Naive thymus-derived CD4-positive, alpha-beta T cell (primary cell): ENCODE measurements at regions of chr5 and their contacts with region 1.

Region 1: DNA sequence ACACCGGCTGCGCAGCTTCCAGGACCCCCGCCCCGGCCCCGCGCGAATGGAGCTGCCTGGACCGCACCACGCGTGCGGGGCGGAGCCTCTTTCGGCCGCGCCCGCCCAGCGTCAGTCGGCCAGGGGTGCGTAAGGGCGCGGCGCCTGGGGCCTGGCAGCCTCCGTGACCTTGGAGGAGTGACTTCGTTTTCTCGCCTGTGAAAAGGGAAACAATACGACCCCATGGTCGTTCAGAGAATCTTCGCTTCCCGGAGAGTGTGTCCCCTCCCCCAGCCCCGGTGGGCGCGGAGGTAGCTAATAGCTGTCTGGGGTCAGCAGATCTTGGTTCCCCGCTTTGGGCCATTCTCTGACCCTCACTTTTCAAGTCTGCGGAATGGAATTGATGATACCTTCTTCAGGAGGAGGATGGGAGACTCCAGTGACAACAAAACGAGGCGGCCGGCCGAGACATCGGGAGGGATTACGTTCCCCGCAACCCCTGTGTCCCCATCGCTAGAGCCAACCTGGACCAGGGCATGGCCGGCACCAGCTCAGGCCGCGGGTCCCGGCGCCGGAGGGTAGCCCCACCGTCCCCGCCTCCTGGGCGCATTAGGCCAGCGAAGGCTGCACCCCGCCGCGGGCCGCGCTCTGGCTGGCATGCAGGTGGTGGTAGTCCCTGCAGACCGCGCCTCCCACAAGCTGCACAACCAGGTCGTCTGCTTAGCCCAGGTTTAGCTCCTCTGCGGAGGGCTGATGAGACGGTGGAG is 5.5 kb upstream of the CDHR2 start:
- DNase-seq: peak; percentile 60 to 84 (median 72)
- ATAC-seq: peak; percentile 79
- H3K4me3 ChIP-seq: peak overlapping the region; percentile 75
- H3K4me3 Mint-ChIP-seq: peak overlapping the region; percentile 90 to 96 (median 94)
- H3K27ac ChIP-seq: peak overlapping the region; percentile 88
- H3K27ac Mint-ChIP-seq: peak overlapping the region; percentile 80 to 97 (median 94)
- H3K4me1 ChIP-seq: peaks cover 46 to 51% of the 10 kb centered on the region in 2 donors
- H3K4me1 Mint-ChIP-seq: peaks cover 41 to 76% (median 69%) of the 10 kb centered on the region in 7 donors
- H3K27me3 ChIP-seq: no peaks in the 10 kb centered on the region
- H3K27me3 Mint-ChIP-seq: no peaks in the 10 kb centered on the region

Region 2: GRCh38 chr5:176388444-176389134 is 155.0 kb before region 1 on chr5 and contains the starts of genes HIGD2A and NOP16:
- CTCF ChIA-PET with region 1: no interaction called
- POLR2A ChIA-PET with region 1: interaction called, 3 read pairs
- intact Hi-C with region 1: loop called (anchors 1 kb)
- DNase-seq: peak; percentile 89 to 99 (median 98)
- ATAC-seq: peak; percentile 95
- H3K4me3 ChIP-seq: peak within 1 kb of the TSS; percentile 95
- H3K4me3 Mint-ChIP-seq: peak within 1 kb of the TSS; percentile 94 to 100 (median 99)
- H3K27ac ChIP-seq: peak within 1 kb of the TSS; percentile 93
- H3K27ac Mint-ChIP-seq: peak within 1 kb of the TSS; percentile 91 to 100 (median 99)
- H3K4me1 ChIP-seq: peaks cover 18% of the 10 kb centered on the region in 2 donors
- H3K4me1 Mint-ChIP-seq: peaks cover 14 to 42% (median 35%) of the 10 kb centered on the region in 7 donors
- H3K27me3 ChIP-seq: no peaks in the 10 kb centered on the region
- H3K27me3 Mint-ChIP-seq: no peaks in the 10 kb centered on the region
- total RNA-seq, gene HIGD2A: 86.8 to 124 (median 112) TPM
- total RNA-seq, gene NOP16: 12.8 to 35.3 (median 22.2) TPM

Region 3: GRCh38 chr5:176508603-176509002 is 35.0 kb before region 1 on chr5:
- CTCF ChIA-PET with region 1: no interaction called
- POLR2A ChIA-PET with region 1: interaction called, 6 read pairs
- intact Hi-C with region 1: loop called in 1 of 2 experiments (anchors 5 kb)
- DNase-seq: no peak
- ATAC-seq: no peak
- H3K4me3 ChIP-seq: no peak overlapping the region
- H3K4me3 Mint-ChIP-seq: no peak overlapping the region
- H3K27ac ChIP-seq: no peak overlapping the region
- H3K27ac Mint-ChIP-seq: peak overlapping the region in 4 of 9 donors; percentile 26 to 71 (median 40)
- H3K4me1 ChIP-seq: no peaks in the 10 kb centered on the region
- H3K4me1 Mint-ChIP-seq: peaks cover 0 to 8% (median 6%) of the 10 kb centered on the region in 7 donors
- H3K27me3 ChIP-seq: no peaks in the 10 kb centered on the region
- H3K27me3 Mint-ChIP-seq: no peaks in the 10 kb centered on the region

Region 4: DNA sequence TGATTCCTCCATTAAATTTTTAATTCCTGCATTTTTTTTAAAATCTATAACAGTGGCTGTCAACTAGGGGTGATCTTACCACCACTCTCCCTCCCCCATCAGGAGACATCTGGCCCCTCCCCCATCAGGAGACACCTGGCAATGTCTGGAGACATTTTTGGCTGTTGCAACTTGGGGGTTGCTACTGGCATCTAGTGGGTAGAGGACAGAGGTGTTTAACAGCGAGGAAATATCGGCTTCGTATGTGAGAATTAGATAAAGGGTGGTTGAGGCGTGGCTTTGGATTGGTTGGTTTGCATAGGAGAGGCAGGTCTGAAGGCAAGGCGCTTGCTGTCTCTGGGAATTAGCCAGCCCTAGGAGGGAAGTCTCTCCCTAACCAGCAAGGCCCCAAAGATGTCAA is 16.1 kb after region 1 on chr5:
- CTCF ChIA-PET with region 1: interaction called, 4 read pairs
- POLR2A ChIA-PET with region 1: interaction called, 118 read pairs
- intact Hi-C with region 1: loop called (anchors 1 to 2 kb)
- DNase-seq: peak in 6 of 9 donors; percentile 20 to 53 (median 40)
- ATAC-seq: peak; percentile 70
- H3K4me3 ChIP-seq: no peak overlapping the region
- H3K4me3 Mint-ChIP-seq: peak overlapping the region in 6 of 10 donors; percentile 4 to 72 (median 42)
- H3K27ac ChIP-seq: no peak overlapping the region
- H3K27ac Mint-ChIP-seq: peak overlapping the region in 5 of 9 donors; percentile 6 to 84 (median 68)
- H3K4me1 ChIP-seq: peaks cover 0 to 43% of the 10 kb centered on the region in 2 donors
- H3K4me1 Mint-ChIP-seq: peaks cover 22 to 56% (median 51%) of the 10 kb centered on the region in 7 donors
- H3K27me3 ChIP-seq: no peaks in the 10 kb centered on the region
- H3K27me3 Mint-ChIP-seq: peaks cover 0 to 10% (median 0%) of the 10 kb centered on the region in 5 donors

Region 5: DNA sequence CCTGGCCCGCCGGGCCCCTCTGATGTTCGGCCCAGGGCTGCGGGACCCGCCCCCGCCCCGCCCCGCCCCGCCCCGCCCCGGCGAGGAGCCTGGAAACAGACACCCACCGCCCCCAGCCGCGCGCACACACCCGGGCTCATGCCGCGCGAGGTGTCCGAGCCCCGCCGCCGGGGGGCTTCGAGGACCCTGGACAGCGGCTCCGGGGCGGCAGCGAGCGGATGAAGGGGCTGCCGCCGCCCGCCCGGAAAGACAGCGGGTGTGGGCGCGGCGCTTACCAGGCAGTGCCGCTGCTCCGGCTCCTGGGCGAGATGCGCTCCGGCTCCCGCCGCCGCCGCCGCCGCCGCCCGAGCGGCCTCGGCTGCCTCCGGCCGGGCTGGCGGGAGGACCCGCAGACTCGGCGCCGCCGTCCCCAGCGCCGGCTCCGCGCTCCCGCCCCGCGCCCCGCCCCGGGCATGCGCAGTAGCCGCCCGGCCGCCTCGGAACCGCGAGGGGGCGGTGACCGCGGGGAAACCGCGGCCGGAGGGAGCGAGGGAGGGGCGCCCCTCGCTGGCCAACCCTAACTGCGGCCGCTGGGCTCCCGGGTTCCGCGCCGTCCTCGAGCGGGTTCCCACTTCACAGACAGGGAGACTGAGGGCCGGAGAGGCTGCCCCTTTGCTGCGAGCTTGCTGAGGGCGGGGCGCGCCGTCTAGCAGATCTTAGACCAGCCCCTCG is 66.3 kb after region 1 on chr5 and contains the start of gene GPRIN1:
- CTCF ChIA-PET with region 1: no interaction called
- POLR2A ChIA-PET with region 1: no interaction called
- intact Hi-C with region 1: loop called in 1 of 2 experiments (anchors 2 kb)
- DNase-seq: peak in 5 of 9 donors; percentile 15 to 85 (median 39)
- ATAC-seq: peak; percentile 72
- H3K4me3 ChIP-seq: no peak within 1 kb of the TSS
- H3K4me3 Mint-ChIP-seq: peak within 1 kb of the TSS; percentile 82 to 95 (median 90)
- H3K27ac ChIP-seq: no peak within 1 kb of the TSS
- H3K27ac Mint-ChIP-seq: peak within 1 kb of the TSS in 3 of 9 donors; percentile 21 to 77 (median 45)
- H3K4me1 ChIP-seq: peaks cover 3 to 4% of the 10 kb centered on the region in 2 donors
- H3K4me1 Mint-ChIP-seq: peaks cover 4 to 17% (median 12%) of the 10 kb centered on the region in 7 donors
- H3K27me3 ChIP-seq: peaks cover 3 to 5% of the 10 kb centered on the region in 2 donors
- H3K27me3 Mint-ChIP-seq: peaks cover 20 to 44% (median 28%) of the 10 kb centered on the region in 5 donors
- total RNA-seq, gene GPRIN1: 0.08 to 2.3 (median 0.32) TPM in 4 of 5 experiments, not detected in the other